ENCODE measurements at regions of chr17 and their contacts with region 1.

Region 1: GRCh38 chr17:4966844-4967538 is 626 bp downstream of the SPAG7 start:
- DNase-seq: peak; percentile 98
- H3K4me3 Mint-ChIP-seq: no peak overlapping the region
- H3K27ac Mint-ChIP-seq: peak overlapping the region; percentile 78
- H3K4me1 Mint-ChIP-seq: peaks cover 24% of the 10 kb centered on the region
- H3K27me3 Mint-ChIP-seq: no peaks in the 10 kb centered on the region

Region 2: DNA sequence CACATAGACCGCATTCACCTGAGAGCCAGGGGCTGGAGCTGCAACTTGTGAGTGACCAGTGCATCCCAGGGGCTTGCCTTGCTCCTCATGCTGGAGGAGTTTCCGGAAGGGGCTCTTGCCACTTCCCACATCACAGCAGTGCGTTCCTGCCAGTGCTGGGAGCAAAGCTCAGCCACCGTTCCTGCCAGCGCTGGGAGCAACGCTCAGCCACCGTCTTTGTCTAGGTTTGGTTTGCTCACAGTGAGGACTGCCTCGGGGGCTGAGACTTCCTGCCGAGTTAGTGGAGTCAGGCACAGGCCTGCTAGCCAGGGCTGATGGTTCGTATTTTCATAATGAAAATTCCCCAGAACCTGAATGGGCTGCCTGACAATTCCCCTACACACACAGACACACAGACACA is 58.7 kb before region 1 on chr17:
- CTCF ChIA-PET with region 1: interaction called, 10 read pairs
- DNase-seq: peak; percentile 47
- H3K4me3 Mint-ChIP-seq: no peak overlapping the region
- H3K27ac Mint-ChIP-seq: no peak overlapping the region
- H3K4me1 Mint-ChIP-seq: peaks cover 12% of the 10 kb centered on the region
- H3K27me3 Mint-ChIP-seq: peaks cover 26% of the 10 kb centered on the region

Region 3: DNA sequence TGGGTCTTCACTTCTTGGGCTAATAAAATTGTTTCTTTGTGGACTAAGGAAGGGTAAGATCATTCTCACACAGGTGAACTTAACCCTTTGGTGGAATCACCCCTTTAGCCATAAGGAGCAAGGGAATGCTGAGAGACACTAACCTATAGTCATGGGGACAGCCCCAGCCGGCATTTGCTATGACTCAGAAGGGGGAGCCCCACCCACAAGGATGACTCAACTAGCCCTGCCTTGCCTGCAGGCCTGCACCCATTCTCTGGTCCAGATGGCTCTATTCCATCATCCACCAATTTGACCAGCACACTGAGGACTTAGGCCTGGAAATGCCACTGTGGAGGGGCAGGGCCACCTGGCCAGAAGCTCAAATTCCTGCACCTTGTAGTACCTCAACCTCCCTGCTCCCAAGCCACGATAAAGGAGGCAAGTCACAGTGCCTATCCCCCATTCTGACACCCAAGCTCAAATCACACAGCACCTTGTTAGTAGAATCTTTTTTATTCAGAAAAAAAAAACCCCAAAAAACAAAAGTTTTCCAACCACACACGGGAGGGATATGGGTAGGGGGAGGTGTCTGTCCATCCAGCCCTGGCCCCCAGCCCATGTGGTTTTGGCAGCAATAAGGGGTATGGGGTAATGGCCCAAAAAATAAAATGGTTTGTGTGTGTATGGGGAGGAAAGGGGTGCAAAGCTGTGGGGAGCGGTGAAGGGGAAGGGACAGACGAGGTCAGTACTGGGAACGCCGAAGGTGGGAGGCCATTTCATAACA is 21.6 kb before region 1 on chr17:
- CTCF ChIA-PET with region 1: interaction called, 10 read pairs
- DNase-seq: peak; percentile 86
- H3K4me3 Mint-ChIP-seq: peak overlapping the region; percentile 92
- H3K27ac Mint-ChIP-seq: peak overlapping the region; percentile 98
- H3K4me1 Mint-ChIP-seq: peaks cover 48% of the 10 kb centered on the region
- H3K27me3 Mint-ChIP-seq: no peaks in the 10 kb centered on the region

Region 4: DNA sequence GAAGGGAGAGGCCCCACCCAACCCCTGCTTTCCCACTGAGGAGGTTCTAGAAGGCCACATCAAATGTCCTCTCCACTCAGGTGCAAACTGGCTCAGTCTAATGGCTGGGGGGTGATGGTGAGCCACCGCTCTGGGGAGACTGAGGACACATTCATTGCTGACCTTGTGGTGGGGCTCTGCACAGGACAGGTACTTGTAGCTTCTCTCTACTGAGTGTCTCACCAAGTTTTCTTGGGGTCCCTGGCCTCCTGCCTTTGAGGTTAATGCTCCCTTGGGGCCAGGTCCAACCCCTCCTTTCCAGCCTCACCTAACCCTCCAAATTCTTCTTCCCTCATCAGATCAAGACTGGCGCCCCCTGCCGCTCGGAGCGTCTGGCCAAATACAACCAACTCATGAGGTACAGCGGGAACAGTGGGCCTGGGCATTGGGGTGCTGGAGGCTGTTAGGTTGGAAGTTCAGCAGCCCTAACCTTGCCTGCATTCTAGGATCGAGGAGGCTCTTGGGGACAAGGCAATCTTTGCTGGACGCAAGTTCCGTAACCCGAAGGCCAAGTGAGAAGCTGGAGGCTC is 10.4 kb before region 1 on chr17:
- CTCF ChIA-PET with region 1: interaction called, 21 read pairs
- DNase-seq: peak; percentile 63
- H3K4me3 Mint-ChIP-seq: no peak overlapping the region
- H3K27ac Mint-ChIP-seq: no peak overlapping the region
- H3K4me1 Mint-ChIP-seq: peaks cover 17% of the 10 kb centered on the region
- H3K27me3 Mint-ChIP-seq: no peaks in the 10 kb centered on the region

Region 5: DNA sequence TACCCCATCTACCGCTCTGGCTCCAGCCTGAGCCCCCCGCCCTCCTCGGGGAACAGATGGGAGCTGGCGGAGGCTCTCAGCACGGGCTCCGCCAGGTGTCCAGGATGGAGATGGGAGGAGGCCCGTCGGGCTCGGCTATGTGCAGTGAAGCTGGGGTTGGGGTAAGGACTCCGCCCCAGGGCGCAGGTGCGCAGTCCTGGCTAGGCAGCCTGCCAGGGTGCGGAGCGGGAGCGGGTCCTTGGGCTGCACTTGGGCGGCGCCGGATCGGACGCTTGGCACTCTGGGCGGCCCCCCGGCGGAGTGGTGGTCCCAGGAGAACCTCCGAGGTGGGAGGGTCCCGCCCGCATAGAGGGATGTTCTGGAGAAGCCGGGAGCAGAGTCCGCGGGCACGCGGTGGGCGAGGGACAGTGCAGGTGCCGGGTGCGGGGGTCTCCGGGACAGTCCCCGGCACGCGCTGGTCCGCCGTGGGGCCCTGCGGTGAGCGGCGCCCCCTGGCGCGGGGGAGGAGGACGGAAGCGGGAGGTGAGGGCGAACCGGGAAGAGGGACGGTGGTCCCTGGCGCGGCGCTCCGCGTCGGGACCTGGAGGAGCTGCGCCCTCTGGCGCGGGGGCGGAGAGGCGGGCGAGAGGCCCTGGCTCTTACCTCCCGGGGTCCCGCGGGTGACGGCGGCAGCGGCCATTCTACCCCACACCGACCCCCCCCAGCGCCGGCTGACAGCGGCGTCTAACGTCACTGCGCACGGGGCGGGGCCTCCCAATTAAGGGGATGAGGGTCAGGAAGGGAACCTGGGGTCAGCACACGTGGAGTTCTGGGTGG is 20.2 kb after region 1 on chr17 and contains the start of gene CAMTA2:
- CTCF ChIA-PET with region 1: interaction called, 17 read pairs
- DNase-seq: peak; percentile 94
- H3K4me3 Mint-ChIP-seq: peak within 1 kb of the TSS; percentile 83
- H3K27ac Mint-ChIP-seq: peak within 1 kb of the TSS; percentile 93
- H3K4me1 Mint-ChIP-seq: peaks cover 45% of the 10 kb centered on the region
- H3K27me3 Mint-ChIP-seq: no peaks in the 10 kb centered on the region

Measured in activated naive CD4-positive, alpha-beta T cell treated with anti-CD3 and anti-CD28 coated beads, Interleukin-2, amount 10 ng/mL, durations not matched to agents 7 days and 5 days (primary cell).